ENCODE measurements at regions of chr6 and their contacts with region 1.

Region 1: GRCh38 chr6:108782179-108783041 is 65.8 kb upstream of the ARMC2 start:
- DNase-seq: peak; percentile 85 to 91 (median 89)
- ATAC-seq: peak; percentile 96
- H3K4me3 ChIP-seq: no peak overlapping the region
- H3K27ac ChIP-seq: peak overlapping the region in 3 of 4 donors; percentile 61 to 74 (median 68)
- H3K4me1 ChIP-seq: peaks cover 16% of the 10 kb centered on the region
- H3K27me3 ChIP-seq: no peaks in the 10 kb centered on the region
- CTCF ChIP-seq: peak; percentile 58 to 88 (median 86)
- POLR2A ChIP-seq: peak in 1 of 3 donors; percentile 17

Region 2: DNA sequence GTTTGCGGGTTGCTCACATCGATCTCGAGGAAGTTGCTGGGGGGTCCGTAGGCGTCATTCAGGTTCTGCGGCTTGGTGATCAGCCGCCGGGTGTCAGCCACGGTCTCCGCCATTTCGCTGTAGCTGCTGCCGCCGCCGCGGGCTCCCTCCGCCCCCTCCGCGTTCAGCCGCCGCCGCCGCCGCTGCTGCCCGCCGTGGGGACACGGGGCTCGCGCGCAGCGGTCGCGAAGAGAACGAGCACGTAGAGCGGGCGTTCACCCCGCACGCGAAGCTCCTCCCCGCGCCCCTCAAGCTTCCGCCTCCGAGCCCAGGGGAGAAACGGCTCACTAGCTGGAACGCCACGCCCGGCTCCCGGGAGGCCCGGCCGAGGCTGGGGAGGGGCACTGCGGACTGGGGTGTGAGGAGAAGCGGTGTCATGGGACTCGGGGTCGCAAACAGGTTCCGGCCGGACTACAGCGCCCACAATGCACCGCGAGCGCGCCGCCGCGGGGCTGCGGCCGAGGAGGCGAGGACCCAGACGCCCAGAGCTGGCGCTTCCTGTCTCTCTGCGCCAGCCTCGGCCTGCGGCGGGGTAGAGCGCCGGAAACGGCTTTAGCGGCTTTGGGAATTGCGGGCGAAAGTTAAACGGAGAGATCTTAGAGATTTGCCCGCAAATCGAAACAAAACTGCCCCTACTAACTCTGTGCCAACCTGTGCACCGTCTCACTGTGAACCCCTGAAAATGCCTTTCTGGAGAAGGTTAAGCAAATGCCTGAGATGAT is 521.4 kb before region 1 on chr6 and contains the start of gene SNX3:
- intact Hi-C with region 1: no loop called
- DNase-seq: peak; percentile 93 to 96 (median 94)
- ATAC-seq: peak; percentile 95
- H3K4me3 ChIP-seq: peak within 1 kb of the TSS; percentile 47 to 81
- H3K27ac ChIP-seq: peak within 1 kb of the TSS; percentile 90 to 97 (median 93)
- H3K4me1 ChIP-seq: peaks cover 34% of the 10 kb centered on the region
- H3K27me3 ChIP-seq: no peaks in the 10 kb centered on the region
- CTCF ChIP-seq: peak in 4 of 7 experiments; percentile 16 to 37 (median 23)
- POLR2A ChIP-seq: peak; percentile 73 to 93 (median 86)
- total RNA-seq, gene SNX3: 61.6 to 77.0 TPM

Region 3: GRCh38 chr6:108565893-108566292 is 216.5 kb before region 1 on chr6:
- intact Hi-C with region 1: loop called (anchors 5 kb)
- DNase-seq: peak in 3 of 4 donors; percentile 31 to 79 (median 37)
- ATAC-seq: peak; percentile 13
- H3K4me3 ChIP-seq: no peak overlapping the region
- H3K27ac ChIP-seq: peak overlapping the region in 3 of 4 donors; percentile 53 to 99 (median 97)
- H3K4me1 ChIP-seq: peaks cover 53% of the 10 kb centered on the region
- H3K27me3 ChIP-seq: no peaks in the 10 kb centered on the region
- CTCF ChIP-seq: peak in 3 of 7 experiments; percentile 29 to 35 (median 33)
- POLR2A ChIP-seq: no peak

Region 4: DNA sequence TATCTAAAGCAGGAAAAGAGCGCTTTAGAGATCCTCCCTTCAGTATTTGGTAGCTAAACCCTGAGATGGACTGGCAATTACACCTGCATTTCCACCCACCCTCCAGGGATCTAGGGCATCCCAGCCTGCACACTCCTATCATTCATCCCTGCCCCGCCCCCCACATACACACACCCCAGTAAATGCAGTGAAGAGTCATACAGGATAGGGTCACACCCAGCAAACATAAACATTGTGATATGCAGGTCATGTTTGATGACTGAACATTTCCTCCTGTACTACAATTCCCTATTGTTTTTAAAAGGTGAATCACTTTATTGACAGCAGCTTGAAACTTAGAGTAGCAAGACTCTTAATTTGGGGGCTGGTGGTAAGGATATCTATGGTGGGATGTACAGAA is 108.8 kb before region 1 on chr6:
- intact Hi-C with region 1: loop called (anchors 10 kb)
- DNase-seq: no peak
- ATAC-seq: no peak
- H3K4me3 ChIP-seq: no peak overlapping the region
- H3K27ac ChIP-seq: no peak overlapping the region
- H3K4me1 ChIP-seq: peaks cover 98% of the 10 kb centered on the region
- H3K27me3 ChIP-seq: no peaks in the 10 kb centered on the region
- CTCF ChIP-seq: no peak
- POLR2A ChIP-seq: no peak

Region 5: DNA sequence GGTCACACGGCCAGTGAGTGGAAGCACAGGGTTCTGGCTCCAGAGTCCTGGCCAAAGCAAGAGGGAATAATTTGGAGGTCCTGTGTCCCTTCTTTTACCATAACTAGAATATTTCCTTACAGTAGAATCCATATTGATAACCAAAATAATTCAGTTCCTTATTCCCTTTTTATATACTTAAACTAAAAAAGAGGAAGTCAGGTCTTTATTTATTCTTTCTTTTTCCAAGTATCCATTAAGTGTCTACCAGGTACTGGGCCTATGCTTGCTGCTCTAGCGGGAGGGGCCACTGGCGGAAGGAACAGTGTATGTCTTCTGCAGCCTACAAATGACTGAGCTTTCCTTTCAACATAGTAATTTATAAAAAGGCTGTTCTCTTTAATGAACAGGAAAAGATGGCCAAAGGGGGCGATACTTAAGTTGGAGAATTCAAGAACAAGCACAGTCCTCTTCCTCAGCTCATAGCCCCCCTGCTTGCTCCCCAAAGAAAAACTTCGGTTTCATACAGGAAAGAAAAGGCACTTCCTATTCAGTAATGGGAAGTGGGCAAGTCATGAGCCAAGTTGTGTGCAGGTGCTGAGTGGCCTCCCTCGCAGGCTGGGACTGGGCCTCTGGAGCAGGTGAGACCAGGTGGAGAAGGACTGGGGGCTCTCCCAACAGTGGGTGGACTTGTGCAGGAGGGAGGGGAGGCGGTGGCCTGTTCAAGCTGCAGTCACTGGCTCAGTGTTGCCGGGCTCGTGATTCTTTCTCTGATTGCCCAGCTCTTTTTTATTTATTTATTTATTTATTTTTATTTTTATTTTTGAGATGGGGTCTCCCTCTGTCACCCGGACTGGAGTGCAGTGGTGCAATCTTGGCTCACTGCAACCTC is 176.7 kb after region 1 on chr6:
- intact Hi-C with region 1: no loop called
- DNase-seq: no peak
- ATAC-seq: no peak
- H3K4me3 ChIP-seq: no peak overlapping the region
- H3K27ac ChIP-seq: no peak overlapping the region
- H3K4me1 ChIP-seq: no peaks in the 10 kb centered on the region
- H3K27me3 ChIP-seq: no peaks in the 10 kb centered on the region
- CTCF ChIP-seq: no peak
- POLR2A ChIP-seq: no peak